PC-3 (cell line): ENCODE measurements at regions of chr2 and their contacts with region 1.

Region 1: GRCh38 chr2:23926750-23927571 is at the start of gene ATAD2B:
- DNase-seq: peak; percentile 98
- ATAC-seq: peak; percentile 85
- H3K4me3 ChIP-seq: peak within 1 kb of the TSS; percentile 89
- H3K27ac ChIP-seq: peak within 1 kb of the TSS; percentile 85
- H3K4me1 ChIP-seq: peaks cover 17% of the 10 kb centered on the region
- H3K27me3 ChIP-seq: no peaks in the 10 kb centered on the region
- CTCF ChIP-seq: peak; percentile 83
- total RNA-seq, gene ATAD2B: 8.6 TPM in 2 replicates

Region 2: GRCh38 chr2:23330214-23330613 is 596.7 kb before region 1 on chr2:
- CTCF ChIA-PET with region 1: no interaction called
- POLR2A ChIA-PET with region 1: no interaction called
- intact Hi-C with region 1: no loop called
- DNase-seq: peak; percentile 7
- ATAC-seq: no peak
- H3K4me3 ChIP-seq: no peak overlapping the region
- H3K27ac ChIP-seq: no peak overlapping the region
- H3K4me1 ChIP-seq: no peaks in the 10 kb centered on the region
- H3K27me3 ChIP-seq: peaks cover 80% of the 10 kb centered on the region
- CTCF ChIP-seq: no peak

Region 3: DNA sequence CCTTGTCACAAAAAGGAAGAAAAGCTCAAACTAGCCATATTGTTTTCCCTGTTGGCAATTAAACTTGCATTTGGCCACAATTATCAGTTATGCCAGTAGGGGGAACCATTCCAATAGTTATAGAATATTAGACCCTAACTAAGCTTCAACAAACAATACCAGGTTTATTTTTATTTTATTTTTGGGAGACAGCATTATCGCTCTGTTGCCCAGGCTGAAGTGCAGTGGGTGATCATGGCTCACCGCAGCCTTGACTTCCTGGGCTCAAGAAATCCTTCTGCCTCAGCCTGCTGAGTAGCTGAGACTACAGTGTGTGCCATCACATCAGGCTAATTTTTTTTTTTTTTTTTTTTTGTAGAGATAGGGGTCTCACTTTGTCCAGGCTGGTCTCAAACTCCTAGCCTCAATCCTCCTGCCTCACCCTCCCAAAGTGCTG is 102.2 kb before region 1 on chr2:
- CTCF ChIA-PET with region 1: interaction called, 39 read pairs
- POLR2A ChIA-PET with region 1: no interaction called
- intact Hi-C with region 1: loop called (anchors 1 kb)
- DNase-seq: peak; percentile 82
- ATAC-seq: peak; percentile 64
- H3K4me3 ChIP-seq: no peak overlapping the region
- H3K27ac ChIP-seq: no peak overlapping the region
- H3K4me1 ChIP-seq: peaks cover 12% of the 10 kb centered on the region; the same call in 1 of the 2 replicates
- H3K27me3 ChIP-seq: no peaks in the 10 kb centered on the region
- CTCF ChIP-seq: peak; percentile 81

Region 4: GRCh38 chr2:23905155-23905554 is 21.8 kb before region 1 on chr2:
- CTCF ChIA-PET with region 1: interaction called, 11 read pairs
- POLR2A ChIA-PET with region 1: interaction called, 7 read pairs
- intact Hi-C with region 1: no loop called
- DNase-seq: no peak
- ATAC-seq: no peak
- H3K4me3 ChIP-seq: no peak overlapping the region
- H3K27ac ChIP-seq: no peak overlapping the region
- H3K4me1 ChIP-seq: peaks cover 28% of the 10 kb centered on the region
- H3K27me3 ChIP-seq: no peaks in the 10 kb centered on the region
- CTCF ChIP-seq: no peak

Region 5: GRCh38 chr2:23939987-23940717 is 13.2 kb after region 1 on chr2 and contains the start of gene UBXN2A:
- CTCF ChIA-PET with region 1: interaction called, 6 read pairs
- POLR2A ChIA-PET with region 1: interaction called, 23 read pairs
- intact Hi-C with region 1: loop called (anchors 1 kb)
- DNase-seq: peak; percentile 87
- ATAC-seq: peak; percentile 73
- H3K4me3 ChIP-seq: peak within 1 kb of the TSS; percentile 90
- H3K27ac ChIP-seq: 0 out of 2 replicates have a peak within 1 kb of the TSS, but pooled peaks have one; percentile 5
- H3K4me1 ChIP-seq: peaks cover 10% of the 10 kb centered on the region; the same call in 1 of the 2 replicates
- H3K27me3 ChIP-seq: no peaks in the 10 kb centered on the region
- CTCF ChIP-seq: no peak
- total RNA-seq, gene UBXN2A: 14.2 and 15.4 TPM in 2 replicates